Heart right ventricle (tissue), 16 donors: ENCODE measurements at regions of chr11 and their contacts with region 1.

Region 1: GRCh38 chr11:73236854-73237253 is 18.8 kb downstream of the P2RY2 start:
- DNase-seq: peak; percentile 54 to 69
- ATAC-seq: peak in 6 of 8 donors; percentile 7 to 52 (median 36)
- H3K4me3 ChIP-seq: no peak overlapping the region
- H3K27ac ChIP-seq: peak overlapping the region in 9 of 10 donors; percentile 57 to 90 (median 80)
- H3K4me1 ChIP-seq: peaks cover 25 to 84% (median 72%) of the 10 kb centered on the region in 9 donors
- H3K27me3 ChIP-seq: no peaks in the 10 kb centered on the region
- CTCF ChIP-seq: peak; percentile 34 to 75 (median 66)

Region 2: GRCh38 chr11:72864702-72865655 is 371.9 kb before region 1 on chr11:
- intact Hi-C with region 1: no loop called
- DNase-seq: peak in 1 of 2 donors; percentile 54
- ATAC-seq: peak; percentile 76 to 90 (median 85)
- H3K4me3 ChIP-seq: no peak overlapping the region
- H3K27ac ChIP-seq: peak overlapping the region; percentile 17 to 81 (median 73)
- H3K4me1 ChIP-seq: peaks cover 8 to 59% (median 35%) of the 10 kb centered on the region in 9 donors
- H3K27me3 ChIP-seq: no peaks in the 10 kb centered on the region
- CTCF ChIP-seq: no peak

Region 3: DNA sequence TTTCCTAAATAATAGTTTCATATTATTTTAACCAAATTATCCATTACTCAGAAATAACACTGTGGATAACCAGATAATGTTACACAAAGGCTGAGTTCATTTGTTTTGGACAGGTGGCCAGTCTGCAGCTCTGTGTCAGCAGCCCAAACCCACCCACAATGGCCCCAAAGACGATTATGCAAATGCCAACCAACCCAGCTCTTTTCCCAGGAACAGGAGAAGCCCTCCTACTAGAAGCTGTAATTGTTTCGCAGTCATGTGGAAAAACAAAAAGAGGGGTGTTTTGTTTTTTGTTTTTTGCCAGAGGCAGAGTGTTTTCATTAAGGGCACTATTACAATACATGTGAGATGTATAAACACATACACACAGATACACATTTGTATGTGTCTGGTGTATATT is 196.8 kb before region 1 on chr11:
- intact Hi-C with region 1: no loop called
- DNase-seq: no peak
- ATAC-seq: no peak
- H3K4me3 ChIP-seq: no peak overlapping the region
- H3K27ac ChIP-seq: no peak overlapping the region
- H3K4me1 ChIP-seq: peaks cover 0 to 9% (median 0%) of the 10 kb centered on the region in 9 donors
- H3K27me3 ChIP-seq: no peaks in the 10 kb centered on the region
- CTCF ChIP-seq: no peak

Region 4: GRCh38 chr11:73218106-73218829 is 18.6 kb before region 1 on chr11 and contains the start of gene P2RY2:
- intact Hi-C with region 1: loop called in 1 of 10 experiments (anchors 1 kb)
- DNase-seq: peak; percentile 82 to 86
- ATAC-seq: peak; percentile 82 to 92 (median 90)
- H3K4me3 ChIP-seq: peak within 1 kb of the TSS; percentile 19 to 67 (median 54)
- H3K27ac ChIP-seq: peak within 1 kb of the TSS; percentile 37 to 92 (median 85)
- H3K4me1 ChIP-seq: peaks cover 6 to 53% (median 29%) of the 10 kb centered on the region in 9 donors
- H3K27me3 ChIP-seq: peaks cover 0 to 7% (median 0%) of the 10 kb centered on the region in 7 donors
- CTCF ChIP-seq: peak; percentile 16 to 75 (median 62)
- total RNA-seq, gene P2RY2: 9.5 to 37.5 (median 12.7) TPM